A549 (cell line): ENCODE measurements at regions of chr17 and their contacts with region 1.

Region 1: DNA sequence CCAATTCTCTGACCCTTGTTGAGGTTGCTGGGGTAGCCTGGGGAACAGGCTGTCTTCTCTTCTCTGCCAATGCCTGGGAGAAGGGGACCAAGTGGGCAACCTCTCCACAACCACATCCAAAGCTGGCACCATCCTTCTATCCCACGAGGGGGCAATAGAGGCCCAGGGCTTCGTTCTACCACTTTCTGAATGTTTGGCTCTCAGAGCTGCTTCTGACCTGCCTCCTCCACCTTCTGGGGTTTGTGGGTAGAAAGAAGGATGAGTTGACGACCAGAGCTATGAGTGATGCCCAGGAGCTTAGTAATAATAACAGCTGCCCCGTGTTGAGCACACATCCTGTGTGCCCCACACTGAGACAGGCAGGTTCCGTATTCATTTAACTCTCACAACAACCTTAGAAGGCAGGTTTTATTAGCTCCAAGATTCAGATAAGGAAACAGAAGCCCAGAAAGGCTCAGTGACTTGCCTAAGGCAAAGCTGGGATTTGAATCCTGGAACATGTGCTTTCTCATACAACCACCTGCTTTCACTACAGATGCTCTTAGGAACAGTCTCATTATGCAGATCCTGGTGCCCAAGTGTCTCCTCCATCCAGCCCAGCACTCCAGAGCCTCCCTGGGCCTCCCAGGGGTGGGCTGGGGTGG is 11.1 kb downstream of the TSPOAP1 start:
- DNase-seq: peak; percentile 77 to 92
- ATAC-seq: peak; percentile 80 to 94
- H3K4me3 ChIP-seq: no peak overlapping the region
- H3K27ac ChIP-seq: peak overlapping the region; percentile 5 to 24; a peak in 1 of 6 replicates
- H3K4me1 ChIP-seq: peaks cover 6% of the 10 kb centered on the region; the same call in 2 of the 3 replicates
- CTCF ChIP-seq: peak; percentile 96
- EP300 ChIP-seq: no peak
- POLR2A ChIP-seq: no peak
- RAD21 ChIP-seq: peak; percentile 98

Region 2: GRCh38 chr17:58284320-58285067 is 33.0 kb before region 1 on chr17:
- CTCF ChIA-PET with region 1: interaction called, 13 read pairs
- POLR2A ChIA-PET with region 1: no interaction called
- DNase-seq: no peak
- ATAC-seq: 0 out of 6 replicates have a peak, but pooled peaks of 1 of the 2 experiments have one; percentile 20
- H3K4me3 ChIP-seq: no peak overlapping the region
- H3K27ac ChIP-seq: no peak overlapping the region
- H3K4me1 ChIP-seq: no peaks in the 10 kb centered on the region; the same call in 2 of the 3 replicates
- CTCF ChIP-seq: no peak
- EP300 ChIP-seq: no peak
- POLR2A ChIP-seq: no peak
- RAD21 ChIP-seq: no peak

Region 3: DNA sequence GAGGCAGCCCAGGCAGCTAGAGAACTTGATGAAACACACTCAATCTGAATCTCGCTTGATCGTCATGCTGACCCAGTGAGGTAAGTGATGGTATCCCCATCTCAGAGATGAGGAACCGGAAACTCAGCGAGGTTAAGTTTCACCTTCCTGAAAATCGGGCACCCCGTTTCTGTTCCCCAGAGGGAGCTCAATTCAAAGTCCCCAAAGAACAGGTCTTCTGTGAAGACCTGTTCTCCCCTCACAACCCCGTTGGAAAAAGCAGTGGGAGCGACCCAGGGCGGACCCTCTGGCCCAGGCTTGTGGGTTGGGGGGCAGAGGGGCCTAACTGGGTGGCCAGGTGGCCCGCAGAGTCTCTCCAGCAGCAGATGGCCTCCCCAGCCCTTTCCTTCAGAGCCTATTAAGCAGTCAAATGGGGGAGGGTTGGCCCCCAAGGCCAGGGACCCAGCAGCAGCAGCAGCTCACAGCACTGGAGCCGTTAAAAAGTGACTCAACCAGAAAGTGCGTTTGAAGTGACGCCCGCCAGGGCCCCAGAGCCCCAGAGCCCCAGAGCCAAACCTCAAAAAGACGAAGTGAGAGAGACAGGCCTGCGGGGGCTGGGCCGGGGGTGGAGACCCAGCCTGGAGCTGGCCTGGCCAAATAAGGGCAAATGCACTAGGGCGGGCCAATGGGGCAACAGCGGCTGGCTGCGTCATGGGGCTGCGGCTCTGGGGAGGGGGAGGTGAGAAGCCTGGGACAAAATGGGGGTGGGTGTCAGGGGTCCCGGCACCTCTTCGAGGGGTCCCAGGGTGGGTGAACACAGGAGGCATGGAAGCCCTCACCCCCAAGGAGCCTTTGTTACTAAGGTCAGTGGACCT is 20.3 kb after region 1 on chr17:
- CTCF ChIA-PET with region 1: interaction called, 22 read pairs
- POLR2A ChIA-PET with region 1: no interaction called
- DNase-seq: no peak
- ATAC-seq: peak in 1 of 2 experiments; percentile 12; a peak in 1 of 6 replicates
- H3K4me3 ChIP-seq: no peak overlapping the region
- H3K27ac ChIP-seq: 0 out of 6 replicates have a peak overlapping the region, but pooled peaks of 1 of the 2 experiments have one; percentile 9
- H3K4me1 ChIP-seq: 0 out of 3 replicates have a peak, but pooled peaks cover 2% of the 10 kb centered on the region
- CTCF ChIP-seq: no peak
- EP300 ChIP-seq: no peak
- POLR2A ChIP-seq: no peak
- RAD21 ChIP-seq: no peak

Region 4: GRCh38 chr17:58377093-58377601 is 59.6 kb after region 1 on chr17:
- CTCF ChIA-PET with region 1: interaction called, 16 read pairs
- POLR2A ChIA-PET with region 1: no interaction called
- DNase-seq: no peak
- ATAC-seq: no peak
- H3K4me3 ChIP-seq: no peak overlapping the region
- H3K27ac ChIP-seq: peak overlapping the region in 1 of 2 experiments; percentile 22; a peak in 1 of 6 replicates
- H3K4me1 ChIP-seq: peaks cover 51% of the 10 kb centered on the region
- CTCF ChIP-seq: no peak
- EP300 ChIP-seq: no peak
- POLR2A ChIP-seq: no peak
- RAD21 ChIP-seq: no peak

Region 5: GRCh38 chr17:58417300-58418092 is 100.0 kb after region 1 on chr17 and contains the start of gene RNF43:
- CTCF ChIA-PET with region 1: interaction called, 232 read pairs
- POLR2A ChIA-PET with region 1: interaction called, 10 read pairs
- DNase-seq: peak; percentile 96 to 98
- ATAC-seq: peak; percentile 98 to 99
- H3K4me3 ChIP-seq: peak within 1 kb of the TSS; percentile 47
- H3K27ac ChIP-seq: peak within 1 kb of the TSS; percentile 76 to 77
- H3K4me1 ChIP-seq: peaks cover 24% of the 10 kb centered on the region; the same call in 2 of the 3 replicates
- CTCF ChIP-seq: peak; percentile 86
- EP300 ChIP-seq: no peak
- POLR2A ChIP-seq: no peak
- RAD21 ChIP-seq: peak; percentile 92 to 95
- polyA plus RNA-seq, gene RNF43: 6.3 and 6.6 TPM in 2 replicates

Region 6: GRCh38 chr17:58463821-58464220 is 146.3 kb after region 1 on chr17:
- CTCF ChIA-PET with region 1: interaction called, 13 read pairs
- POLR2A ChIA-PET with region 1: no interaction called
- DNase-seq: no peak
- ATAC-seq: no peak
- H3K4me3 ChIP-seq: no peak overlapping the region
- H3K27ac ChIP-seq: no peak overlapping the region
- H3K4me1 ChIP-seq: no peaks in the 10 kb centered on the region
- CTCF ChIP-seq: no peak
- EP300 ChIP-seq: no peak
- POLR2A ChIP-seq: no peak
- RAD21 ChIP-seq: no peak

Region 7: DNA sequence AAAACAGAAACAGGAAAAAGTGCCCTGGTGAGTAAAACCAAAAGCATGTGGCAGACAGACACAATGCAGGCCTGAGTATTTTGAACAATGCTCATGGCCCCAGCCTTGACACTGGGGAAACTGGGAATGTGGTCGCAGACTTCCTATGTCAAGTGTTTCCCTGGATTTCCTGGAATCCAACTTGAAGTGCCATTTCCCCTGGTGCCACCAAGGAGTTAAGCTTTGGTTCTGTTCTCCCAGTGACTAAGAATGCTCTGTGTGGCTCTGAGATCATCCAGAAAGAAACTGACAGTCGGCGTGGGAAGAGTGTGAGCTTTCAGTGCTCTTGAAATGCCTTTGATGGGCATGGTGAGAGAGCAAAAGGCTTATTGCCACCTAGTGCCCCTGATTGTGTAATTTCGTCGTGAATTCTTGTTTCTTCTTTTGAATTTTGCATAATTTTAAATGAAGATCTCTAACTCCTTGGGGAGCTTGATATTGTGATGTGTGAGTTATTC is 1109.9 kb after region 1 on chr17:
- CTCF ChIA-PET with region 1: no interaction called
- POLR2A ChIA-PET with region 1: no interaction called
- DNase-seq: peak in 1 of 2 experiments; percentile 20
- ATAC-seq: no peak
- H3K4me3 ChIP-seq: no peak overlapping the region
- H3K27ac ChIP-seq: peak overlapping the region in 1 of 2 experiments; percentile 23; a peak in 1 of 6 replicates
- H3K4me1 ChIP-seq: peaks cover 11% of the 10 kb centered on the region
- CTCF ChIP-seq: no peak
- EP300 ChIP-seq: no peak
- POLR2A ChIP-seq: no peak
- RAD21 ChIP-seq: no peak